ENCODE measurements at regions of chr15 and their contacts with region 1.

Region 1: DNA sequence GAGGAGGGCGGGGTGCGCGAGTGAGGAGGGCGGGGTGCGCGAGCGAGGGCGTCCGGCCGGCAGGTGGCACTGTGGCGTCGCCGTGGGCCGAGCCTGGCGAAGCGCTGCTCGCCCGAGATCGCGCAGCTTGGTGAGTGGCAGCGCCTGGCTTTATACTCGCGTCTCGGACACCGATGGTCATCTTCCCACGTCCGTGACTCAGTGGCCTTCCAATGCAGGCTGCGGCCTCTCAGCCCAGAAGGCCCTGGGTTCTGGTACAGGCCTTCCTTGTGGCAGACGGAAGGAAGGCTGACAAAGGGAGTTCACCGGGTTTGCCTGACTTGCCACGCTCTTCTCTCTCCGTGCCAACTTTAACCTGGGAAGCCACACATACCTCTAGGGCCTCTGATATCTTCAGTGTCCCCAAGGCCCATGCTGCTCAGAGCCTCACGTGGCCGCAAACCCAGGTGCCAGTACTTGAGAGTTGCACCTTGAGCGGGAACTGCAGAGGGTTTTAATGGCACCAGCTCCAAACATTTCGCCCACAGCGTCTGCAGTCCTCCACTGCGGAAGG is 195.3 kb upstream of the LYSMD4 start:
- DNase-seq: peak; percentile 76 to 95 (median 88)
- ATAC-seq: peak; percentile 85
- H3K4me3 ChIP-seq: peak overlapping the region; percentile 75
- H3K4me3 Mint-ChIP-seq: peak overlapping the region; percentile 93
- H3K27ac ChIP-seq: peak overlapping the region; percentile 56 to 58
- H3K27ac Mint-ChIP-seq: peak overlapping the region; percentile 89
- H3K4me1 ChIP-seq: peaks cover 21% of the 10 kb centered on the region
- H3K4me1 Mint-ChIP-seq: peaks cover 24% of the 10 kb centered on the region
- H3K27me3 ChIP-seq: no peaks in the 10 kb centered on the region
- H3K27me3 Mint-ChIP-seq: peaks cover 5% of the 10 kb centered on the region
- CTCF ChIP-seq: peak; percentile 65

Region 2: DNA sequence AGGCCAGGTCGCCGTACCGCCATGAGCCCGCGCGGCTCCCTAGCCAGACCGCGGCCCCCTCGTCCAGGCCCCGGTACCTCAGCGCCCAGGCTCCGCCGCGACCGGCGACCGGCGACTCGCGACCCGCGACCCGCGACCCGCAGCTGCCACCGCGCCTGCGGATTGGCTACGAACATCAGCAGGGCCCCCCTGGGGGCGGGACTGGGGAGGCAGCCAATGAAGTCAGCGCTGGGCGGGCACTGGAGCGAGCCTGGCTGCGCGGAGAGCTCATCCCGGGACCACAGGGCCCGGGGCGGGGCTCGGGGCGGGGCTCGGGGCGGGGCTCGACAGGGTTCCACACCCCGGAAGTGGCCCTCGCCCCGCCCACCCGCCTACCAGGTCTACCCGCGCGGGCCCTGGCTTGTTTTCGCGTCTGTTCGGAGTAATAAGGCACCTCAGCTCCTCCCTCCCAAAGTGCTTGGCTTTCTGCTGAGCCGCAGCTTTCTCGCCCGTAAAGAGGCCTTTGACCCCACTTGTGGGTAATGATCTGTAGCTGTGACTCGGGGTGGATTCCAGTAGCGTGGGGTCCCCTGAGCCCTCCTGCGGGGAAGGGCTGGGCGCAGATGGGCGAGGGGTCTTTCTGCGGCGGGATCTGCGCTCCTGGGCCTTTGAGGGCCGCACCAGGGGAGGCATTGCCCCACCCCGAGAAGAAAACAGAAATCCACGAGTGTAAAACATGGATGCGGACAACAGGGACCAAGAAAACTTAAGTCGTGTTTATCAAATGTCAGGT is 195.1 kb before region 1 on chr15 and contains the start of gene LYSMD4:
- CTCF ChIA-PET with region 1: no interaction called
- POLR2A ChIA-PET with region 1: interaction called, 10 read pairs
- intact Hi-C with region 1: loop called in 1 of 2 experiments (anchors 5 kb)
- DNase-seq: peak; percentile 97 to 99 (median 98)
- ATAC-seq: peak; percentile 98
- H3K4me3 ChIP-seq: peak within 1 kb of the TSS; percentile 80
- H3K4me3 Mint-ChIP-seq: peak within 1 kb of the TSS; percentile 94
- H3K27ac ChIP-seq: peak within 1 kb of the TSS; percentile 81 to 85
- H3K27ac Mint-ChIP-seq: peak within 1 kb of the TSS; percentile 94
- H3K4me1 ChIP-seq: peaks cover 16% of the 10 kb centered on the region
- H3K4me1 Mint-ChIP-seq: peaks cover 28% of the 10 kb centered on the region
- H3K27me3 ChIP-seq: no peaks in the 10 kb centered on the region
- H3K27me3 Mint-ChIP-seq: no peaks in the 10 kb centered on the region
- CTCF ChIP-seq: no peak
- total RNA-seq, gene LYSMD4: 12.9 to 13.0 TPM

Region 3: DNA sequence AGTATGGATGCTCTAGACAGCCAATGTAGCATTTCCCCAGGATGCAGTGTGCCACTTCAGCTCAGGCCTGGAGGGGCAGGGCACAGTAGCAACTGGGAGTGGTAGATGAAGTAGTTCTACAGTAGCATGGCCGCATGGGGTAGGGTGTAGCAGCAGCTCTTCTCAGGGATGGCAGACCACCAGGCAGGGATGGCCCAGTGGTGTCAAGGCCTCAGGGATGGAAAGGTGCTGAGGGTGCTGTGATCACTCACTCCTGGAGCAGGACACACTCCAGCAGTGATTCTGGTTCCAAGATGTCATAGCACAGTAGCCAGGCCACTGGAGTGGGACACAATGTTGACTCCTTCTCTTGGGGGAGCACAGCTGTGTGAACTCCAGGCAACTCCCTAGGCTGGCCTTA is 15.6 kb after region 1 on chr15:
- CTCF ChIA-PET with region 1: no interaction called
- POLR2A ChIA-PET with region 1: no interaction called
- intact Hi-C with region 1: no loop called
- DNase-seq: no peak
- ATAC-seq: no peak
- H3K4me3 ChIP-seq: no peak overlapping the region
- H3K4me3 Mint-ChIP-seq: no peak overlapping the region
- H3K27ac ChIP-seq: no peak overlapping the region
- H3K27ac Mint-ChIP-seq: no peak overlapping the region
- H3K4me1 ChIP-seq: no peaks in the 10 kb centered on the region
- H3K4me1 Mint-ChIP-seq: no peaks in the 10 kb centered on the region
- H3K27me3 ChIP-seq: no peaks in the 10 kb centered on the region
- H3K27me3 Mint-ChIP-seq: peaks cover 8% of the 10 kb centered on the region
- CTCF ChIP-seq: no peak

Region 4: DNA sequence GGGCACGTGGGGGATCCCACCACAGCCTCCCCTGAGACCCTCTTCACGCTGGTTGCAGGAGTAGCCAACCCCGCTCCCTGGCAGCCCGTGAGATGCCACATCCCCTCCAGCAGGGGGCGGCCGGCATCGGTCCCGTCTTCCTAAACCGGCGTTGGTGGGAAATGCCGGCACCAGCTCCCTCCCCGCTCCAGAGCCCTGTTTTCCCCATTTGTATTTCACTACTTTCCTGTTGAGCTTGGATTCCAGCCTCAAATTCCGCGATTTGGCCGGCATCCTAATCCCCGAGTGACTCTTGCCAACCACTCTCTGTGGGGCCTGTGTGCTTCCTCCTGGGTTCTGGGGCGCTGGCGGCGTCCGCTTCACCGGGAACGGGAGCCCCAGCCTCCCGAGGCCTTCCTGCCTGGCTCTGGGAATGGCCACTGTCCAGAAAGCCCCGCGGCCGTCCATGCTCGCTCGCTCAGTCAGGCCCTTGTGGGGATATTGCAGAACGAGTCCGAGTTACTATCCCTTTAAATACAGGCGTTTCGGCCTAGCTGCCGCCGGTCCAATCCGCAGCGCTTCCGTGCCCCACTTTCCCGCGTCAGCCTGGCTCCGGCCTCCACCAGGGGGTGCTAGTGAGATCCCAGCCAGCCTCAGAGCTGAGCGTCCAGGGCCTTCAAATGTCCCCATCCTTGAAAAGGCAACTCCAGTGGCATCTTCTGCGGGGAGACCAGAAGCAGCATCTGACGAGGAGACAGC is 421.4 kb after region 1 on chr15:
- CTCF ChIA-PET with region 1: interaction called, 24 read pairs
- POLR2A ChIA-PET with region 1: interaction called, 10 read pairs
- intact Hi-C with region 1: no loop called
- DNase-seq: peak; percentile 72 to 91 (median 79)
- ATAC-seq: peak; percentile 92
- H3K4me3 ChIP-seq: peak overlapping the region; percentile 92
- H3K4me3 Mint-ChIP-seq: peak overlapping the region; percentile 98
- H3K27ac ChIP-seq: peak overlapping the region; percentile 59 to 72
- H3K27ac Mint-ChIP-seq: peak overlapping the region; percentile 83
- H3K4me1 ChIP-seq: peaks cover 14% of the 10 kb centered on the region
- H3K4me1 Mint-ChIP-seq: peaks cover 13% of the 10 kb centered on the region
- H3K27me3 ChIP-seq: peaks cover 12 to 18% of the 10 kb centered on the region in 2 experiments
- H3K27me3 Mint-ChIP-seq: peaks cover 34% of the 10 kb centered on the region
- CTCF ChIP-seq: peak; percentile 90

Region 5: GRCh38 chr15:100602064-100602822 is 673.7 kb after region 1 on chr15 and contains the starts of genes ASB7 and LINS1:
- CTCF ChIA-PET with region 1: interaction called, 6 read pairs
- POLR2A ChIA-PET with region 1: interaction called, 6 read pairs
- intact Hi-C with region 1: loop called (anchors 2 to 10 kb)
- DNase-seq: peak; percentile 99 to 100 (median 100)
- ATAC-seq: peak; percentile 89
- H3K4me3 ChIP-seq: peak within 1 kb of the TSS; percentile 96
- H3K4me3 Mint-ChIP-seq: peak within 1 kb of the TSS; percentile 96
- H3K27ac ChIP-seq: peak within 1 kb of the TSS; percentile 84 to 94
- H3K27ac Mint-ChIP-seq: peak within 1 kb of the TSS; percentile 87
- H3K4me1 ChIP-seq: peaks cover 44% of the 10 kb centered on the region
- H3K4me1 Mint-ChIP-seq: peaks cover 62% of the 10 kb centered on the region
- H3K27me3 ChIP-seq: no peaks in the 10 kb centered on the region
- H3K27me3 Mint-ChIP-seq: no peaks in the 10 kb centered on the region
- CTCF ChIP-seq: no peak
- total RNA-seq, gene ASB7: 14.9 to 16.7 TPM
- total RNA-seq, gene LINS1: 38.9 to 39.6 TPM

Region 6: GRCh38 chr15:101251830-101252820 is 1323.6 kb after region 1 on chr15 and contains the start of gene CHSY1:
- CTCF ChIA-PET with region 1: no interaction called
- POLR2A ChIA-PET with region 1: no interaction called
- intact Hi-C with region 1: loop called in 1 of 2 experiments (anchors 10 kb)
- DNase-seq: peak; percentile 61 to 93 (median 76)
- ATAC-seq: peak; percentile 75
- H3K4me3 ChIP-seq: peak within 1 kb of the TSS; percentile 66
- H3K4me3 Mint-ChIP-seq: peak within 1 kb of the TSS; percentile 100
- H3K27ac ChIP-seq: no peak within 1 kb of the TSS
- H3K27ac Mint-ChIP-seq: peak within 1 kb of the TSS; percentile 89
- H3K4me1 ChIP-seq: peaks cover 25% of the 10 kb centered on the region
- H3K4me1 Mint-ChIP-seq: peaks cover 38% of the 10 kb centered on the region
- H3K27me3 ChIP-seq: no peaks in the 10 kb centered on the region
- H3K27me3 Mint-ChIP-seq: no peaks in the 10 kb centered on the region
- CTCF ChIP-seq: no peak
- total RNA-seq, gene CHSY1: 5.8 to 6.7 TPM